H1 (cell line): ENCODE measurements at regions of chr13 and their contacts with region 1.

Region 1: DNA sequence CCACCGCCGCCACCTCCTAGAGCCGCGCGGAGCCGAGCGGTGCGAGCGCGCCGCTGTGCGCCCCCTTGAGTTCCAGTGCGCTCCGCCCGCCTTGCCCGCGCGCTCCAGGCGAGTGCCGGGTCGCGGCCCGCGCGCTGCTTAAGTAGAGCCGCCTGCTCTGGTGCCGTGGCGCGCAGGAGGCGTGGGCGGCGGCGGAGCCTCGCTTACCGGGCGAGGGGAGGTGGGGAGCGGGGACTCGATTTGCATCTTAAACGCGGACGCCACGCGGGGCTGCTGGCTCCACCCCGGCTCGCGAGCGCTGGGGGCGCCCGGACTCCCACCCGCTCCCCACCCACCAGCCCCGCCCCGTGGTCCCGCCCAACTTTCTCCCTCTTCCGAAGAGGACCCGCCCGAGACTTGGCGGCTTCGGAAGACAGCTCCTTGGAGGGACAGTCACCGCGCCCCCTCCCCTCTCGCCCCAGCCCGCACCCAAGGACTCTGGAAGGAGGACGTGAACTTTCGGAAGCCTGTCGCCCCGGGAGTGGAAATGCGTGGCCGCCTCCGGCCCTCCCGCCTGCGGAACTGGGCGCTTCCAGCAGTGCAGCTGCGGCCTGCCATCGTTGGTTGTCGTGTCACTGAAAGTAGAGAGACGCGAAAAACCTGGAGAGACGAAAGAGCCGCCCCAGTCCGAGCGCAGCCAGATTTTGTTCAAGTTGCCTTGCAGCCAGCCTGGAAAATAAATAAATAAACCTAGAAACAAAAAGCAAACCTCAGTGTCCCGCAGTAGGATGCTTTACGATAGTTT is at the start of gene KCTD12:
- DNase-seq: peak in 1 of 2 experiments; percentile 19
- H3K4me3 ChIP-seq: peak within 1 kb of the TSS; percentile 67 to 74 (median 70)
- H3K27ac ChIP-seq: no peak within 1 kb of the TSS
- H3K4me1 ChIP-seq: peaks cover 0 to 5% (median 4%) of the 10 kb centered on the region in 4 experiments
- H3K27me3 ChIP-seq: peaks cover 10 to 43% (median 38%) of the 10 kb centered on the region in 4 experiments
- CTCF ChIP-seq: peak; percentile 29 to 56 (median 29); a peak in 3 of 4 replicates
- EP300 ChIP-seq: no peak
- POLR2A ChIP-seq: 0 out of 3 replicates have a peak, but pooled peaks of 1 of the 2 experiments have one; percentile 22
- RAD21 ChIP-seq: peak; percentile 11 to 38; a peak in 2 of 4 replicates
- total RNA-seq, gene KCTD12: 9.1 and 9.6 TPM in 2 replicates

Region 2: GRCh38 chr13:76667551-76667950 is 218.9 kb before region 1 on chr13:
- CTCF ChIA-PET with region 1: interaction called, 21 read pairs
- POLR2A ChIA-PET with region 1: no interaction called
- DNase-seq: no peak
- H3K4me3 ChIP-seq: no peak overlapping the region
- H3K27ac ChIP-seq: no peak overlapping the region
- H3K4me1 ChIP-seq: no peaks in the 10 kb centered on the region
- H3K27me3 ChIP-seq: no peaks in the 10 kb centered on the region
- CTCF ChIP-seq: peak in 2 of 3 experiments; percentile 20 to 22; a peak in 2 of 4 replicates
- EP300 ChIP-seq: no peak
- POLR2A ChIP-seq: no peak
- RAD21 ChIP-seq: peak; percentile 53 to 55

Region 3: DNA sequence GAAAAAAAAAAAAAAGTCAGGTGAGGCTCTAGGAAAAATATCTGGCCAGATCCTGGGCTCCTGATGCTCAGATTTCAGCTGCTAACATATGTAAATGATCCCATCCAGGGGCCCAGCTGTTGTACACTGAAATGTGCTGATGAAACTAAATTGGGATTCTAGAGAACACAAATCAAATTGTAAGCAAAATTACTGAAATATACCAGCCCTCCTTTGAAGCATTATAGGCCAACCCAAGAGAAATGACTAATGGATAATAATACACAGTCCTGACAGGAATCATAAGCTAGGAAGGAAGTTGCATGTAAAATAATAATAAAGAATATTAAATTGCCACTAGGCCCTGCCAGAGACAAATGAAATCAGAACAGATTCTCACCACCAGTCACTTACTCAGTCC is 18.1 kb before region 1 on chr13:
- CTCF ChIA-PET with region 1: interaction called, 15 read pairs
- POLR2A ChIA-PET with region 1: no interaction called
- DNase-seq: no peak
- H3K4me3 ChIP-seq: no peak overlapping the region
- H3K27ac ChIP-seq: no peak overlapping the region
- H3K4me1 ChIP-seq: no peaks in the 10 kb centered on the region; a peak in 1 of 7 replicates
- H3K27me3 ChIP-seq: no peaks in the 10 kb centered on the region
- CTCF ChIP-seq: no peak
- EP300 ChIP-seq: no peak
- POLR2A ChIP-seq: no peak
- RAD21 ChIP-seq: no peak

Region 4: GRCh38 chr13:76874479-76874878 is 12.0 kb before region 1 on chr13:
- CTCF ChIA-PET with region 1: interaction called, 15 read pairs
- POLR2A ChIA-PET with region 1: interaction called, 3 read pairs
- DNase-seq: no peak
- H3K4me3 ChIP-seq: no peak overlapping the region
- H3K27ac ChIP-seq: no peak overlapping the region
- H3K4me1 ChIP-seq: no peaks in the 10 kb centered on the region
- H3K27me3 ChIP-seq: no peaks in the 10 kb centered on the region
- CTCF ChIP-seq: no peak
- EP300 ChIP-seq: no peak
- POLR2A ChIP-seq: no peak
- RAD21 ChIP-seq: no peak

Region 5: GRCh38 chr13:76903544-76904162 is 17.2 kb after region 1 on chr13:
- CTCF ChIA-PET with region 1: interaction called, 15 read pairs
- POLR2A ChIA-PET with region 1: interaction called, 4 read pairs
- DNase-seq: peak; percentile 41 to 75
- H3K4me3 ChIP-seq: no peak overlapping the region
- H3K27ac ChIP-seq: no peak overlapping the region
- H3K4me1 ChIP-seq: no peaks in the 10 kb centered on the region
- H3K27me3 ChIP-seq: no peaks in the 10 kb centered on the region
- CTCF ChIP-seq: peak; percentile 75 to 99 (median 82)
- EP300 ChIP-seq: no peak
- POLR2A ChIP-seq: no peak
- RAD21 ChIP-seq: peak; percentile 98 to 99